CD4-positive, alpha-beta memory T cell (primary cell): ENCODE measurements at regions of chr12 and their contacts with region 1.

Region 1: GRCh38 chr12:46124848-46125619 is 134.7 kb upstream of the SCAF11 start:
- DNase-seq: peak; percentile 60 to 62 (median 62)
- H3K4me3 ChIP-seq: no peak overlapping the region
- H3K4me3 Mint-ChIP-seq: peak overlapping the region; percentile 34 to 76 (median 62)
- H3K27ac ChIP-seq: no peak overlapping the region
- H3K27ac Mint-ChIP-seq: peak overlapping the region in 5 of 7 donors; percentile 85 to 95 (median 89)
- H3K4me1 ChIP-seq: peaks cover 4% of the 10 kb centered on the region
- H3K4me1 Mint-ChIP-seq: peaks cover 3 to 6% (median 4%) of the 10 kb centered on the region in 4 donors
- H3K27me3 ChIP-seq: no peaks in the 10 kb centered on the region
- H3K27me3 Mint-ChIP-seq: peaks cover 8 to 15% of the 10 kb centered on the region in 2 donors

Region 2: GRCh38 chr12:46020768-46021167 is 104.3 kb before region 1 on chr12:
- CTCF ChIA-PET with region 1: no interaction called
- POLR2A ChIA-PET with region 1: no interaction called
- intact Hi-C with region 1: no loop called
- DNase-seq: no peak
- H3K4me3 ChIP-seq: no peak overlapping the region
- H3K4me3 Mint-ChIP-seq: no peak overlapping the region
- H3K27ac ChIP-seq: no peak overlapping the region
- H3K27ac Mint-ChIP-seq: no peak overlapping the region
- H3K4me1 ChIP-seq: no peaks in the 10 kb centered on the region
- H3K4me1 Mint-ChIP-seq: no peaks in the 10 kb centered on the region
- H3K27me3 ChIP-seq: no peaks in the 10 kb centered on the region
- H3K27me3 Mint-ChIP-seq: peaks cover 7 to 10% of the 10 kb centered on the region in 2 donors

Region 3: GRCh38 chr12:46110928-46111699 is 13.9 kb before region 1 on chr12:
- CTCF ChIA-PET with region 1: interaction called, 13 read pairs
- POLR2A ChIA-PET with region 1: no interaction called
- intact Hi-C with region 1: no loop called
- DNase-seq: no peak
- H3K4me3 ChIP-seq: no peak overlapping the region
- H3K4me3 Mint-ChIP-seq: no peak overlapping the region
- H3K27ac ChIP-seq: no peak overlapping the region
- H3K27ac Mint-ChIP-seq: no peak overlapping the region
- H3K4me1 ChIP-seq: no peaks in the 10 kb centered on the region
- H3K4me1 Mint-ChIP-seq: no peaks in the 10 kb centered on the region
- H3K27me3 ChIP-seq: no peaks in the 10 kb centered on the region
- H3K27me3 Mint-ChIP-seq: peaks cover 8 to 13% of the 10 kb centered on the region in 2 donors

Region 4: DNA sequence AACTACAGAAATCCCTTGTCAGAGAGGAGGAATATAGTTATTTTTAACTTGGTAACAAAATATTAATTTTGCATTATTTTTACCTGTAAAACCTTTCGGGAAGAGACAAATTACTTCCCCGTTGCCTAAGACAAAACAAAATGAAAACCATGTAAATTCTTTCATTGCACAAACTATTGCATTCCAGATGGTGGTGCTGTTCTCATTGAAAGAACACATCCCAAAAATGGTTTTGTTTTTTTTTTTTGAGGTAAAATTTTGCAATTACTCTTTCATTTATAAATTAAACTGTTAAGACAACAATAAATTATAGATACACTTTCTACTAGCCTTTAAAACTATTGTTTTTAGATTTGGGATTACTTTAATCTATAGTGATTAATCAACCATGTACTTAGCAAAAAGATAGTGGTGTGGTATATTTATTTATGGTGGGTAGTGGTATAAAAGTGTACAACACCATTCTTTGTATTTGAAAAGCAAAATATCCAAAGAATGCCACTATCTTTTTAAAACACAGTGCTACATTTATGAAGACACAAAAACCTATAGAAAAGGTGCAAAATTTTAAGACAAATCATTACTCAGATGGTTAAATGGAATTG is 28.3 kb after region 1 on chr12:
- CTCF ChIA-PET with region 1: interaction called, 12 read pairs
- POLR2A ChIA-PET with region 1: no interaction called
- intact Hi-C with region 1: loop called (anchors 2 kb)
- DNase-seq: peak in 4 of 5 donors; percentile 38 to 50 (median 45)
- H3K4me3 ChIP-seq: no peak overlapping the region
- H3K4me3 Mint-ChIP-seq: no peak overlapping the region
- H3K27ac ChIP-seq: no peak overlapping the region
- H3K27ac Mint-ChIP-seq: no peak overlapping the region
- H3K4me1 ChIP-seq: peaks cover 11% of the 10 kb centered on the region
- H3K4me1 Mint-ChIP-seq: peaks cover 0 to 11% (median 9%) of the 10 kb centered on the region in 4 donors
- H3K27me3 ChIP-seq: no peaks in the 10 kb centered on the region
- H3K27me3 Mint-ChIP-seq: peaks cover under 1 to 4% of the 10 kb centered on the region in 2 donors

Region 5: DNA sequence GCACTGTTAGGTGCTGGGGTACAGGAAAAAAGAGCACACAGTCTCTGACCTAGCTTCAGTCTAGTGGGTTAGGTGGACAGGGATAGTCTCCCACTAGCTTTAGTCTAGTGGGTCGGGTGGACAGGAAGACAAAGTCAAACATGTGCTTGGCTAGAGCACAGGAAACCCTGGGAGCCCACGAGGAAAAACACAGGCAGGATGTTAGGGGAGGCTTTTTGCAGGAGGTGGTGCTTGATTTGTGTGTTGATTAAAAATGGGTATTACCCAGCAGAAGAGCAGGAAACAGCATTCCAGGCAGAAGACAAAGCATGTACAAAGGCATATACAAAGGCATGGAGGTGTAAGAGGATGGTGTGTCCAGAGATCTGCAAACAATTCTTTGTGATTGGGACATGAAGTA is 224.2 kb after region 1 on chr12:
- CTCF ChIA-PET with region 1: no interaction called
- POLR2A ChIA-PET with region 1: no interaction called
- intact Hi-C with region 1: no loop called
- DNase-seq: no peak
- H3K4me3 ChIP-seq: no peak overlapping the region
- H3K4me3 Mint-ChIP-seq: no peak overlapping the region
- H3K27ac ChIP-seq: no peak overlapping the region
- H3K27ac Mint-ChIP-seq: peak overlapping the region in 1 of 7 donors; percentile 17
- H3K4me1 ChIP-seq: peaks cover 1% of the 10 kb centered on the region
- H3K4me1 Mint-ChIP-seq: peaks cover 8 to 18% (median 11%) of the 10 kb centered on the region in 4 donors
- H3K27me3 ChIP-seq: no peaks in the 10 kb centered on the region
- H3K27me3 Mint-ChIP-seq: peaks cover 0 to 1% of the 10 kb centered on the region in 2 donors

Region 6: GRCh38 chr12:46562625-46563228 is 437.7 kb after region 1 on chr12:
- CTCF ChIA-PET with region 1: no interaction called
- POLR2A ChIA-PET with region 1: no interaction called
- intact Hi-C with region 1: no loop called
- DNase-seq: no peak
- H3K4me3 ChIP-seq: no peak overlapping the region
- H3K4me3 Mint-ChIP-seq: no peak overlapping the region
- H3K27ac ChIP-seq: no peak overlapping the region
- H3K27ac Mint-ChIP-seq: no peak overlapping the region
- H3K4me1 ChIP-seq: no peaks in the 10 kb centered on the region
- H3K4me1 Mint-ChIP-seq: peaks cover 0 to 2% (median under 1%) of the 10 kb centered on the region in 4 donors
- H3K27me3 ChIP-seq: no peaks in the 10 kb centered on the region
- H3K27me3 Mint-ChIP-seq: no peaks in the 10 kb centered on the region

Region 7: DNA sequence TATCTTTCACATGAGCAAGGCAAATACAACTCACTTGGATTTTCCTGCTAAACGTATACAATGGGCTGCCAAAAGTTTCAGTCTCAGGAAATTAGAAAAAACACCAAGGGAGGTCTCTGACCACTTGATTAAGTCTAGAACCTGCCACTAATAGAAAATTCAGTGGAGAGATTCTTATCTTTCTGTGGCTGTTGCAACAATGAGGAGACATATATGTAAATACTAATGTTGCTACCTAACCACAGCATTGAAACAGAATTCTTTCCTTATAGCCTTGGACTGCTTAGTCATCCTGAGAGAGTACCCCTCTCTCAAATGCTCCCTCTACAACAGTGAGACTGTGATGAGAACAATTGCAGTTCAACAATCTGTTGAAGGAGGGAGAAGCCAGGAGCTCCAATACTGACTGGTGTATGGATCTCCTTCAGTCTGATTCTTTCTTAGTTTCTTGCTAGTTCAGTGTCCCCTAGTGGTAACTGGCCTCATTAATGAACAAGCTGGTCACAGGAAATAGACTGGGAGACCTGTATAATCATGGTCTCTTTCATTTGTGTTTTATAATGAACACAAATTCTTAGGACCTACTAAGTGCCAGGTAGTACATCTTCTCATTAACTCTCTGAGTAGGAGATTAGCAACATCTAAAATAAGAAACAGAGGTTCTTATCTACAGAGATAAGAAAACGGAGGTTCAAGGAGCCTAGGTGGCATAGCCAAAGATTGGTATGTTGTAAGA is 536.2 kb after region 1 on chr12:
- CTCF ChIA-PET with region 1: interaction called, 5 read pairs
- POLR2A ChIA-PET with region 1: no interaction called
- intact Hi-C with region 1: loop called (anchors 1 kb)
- DNase-seq: peak in 4 of 5 donors; percentile 48 to 55 (median 52)
- H3K4me3 ChIP-seq: no peak overlapping the region
- H3K4me3 Mint-ChIP-seq: no peak overlapping the region
- H3K27ac ChIP-seq: no peak overlapping the region
- H3K27ac Mint-ChIP-seq: peak overlapping the region in 1 of 7 donors; percentile 43
- H3K4me1 ChIP-seq: peaks cover 14% of the 10 kb centered on the region
- H3K4me1 Mint-ChIP-seq: peaks cover 16 to 27% (median 22%) of the 10 kb centered on the region in 4 donors
- H3K27me3 ChIP-seq: no peaks in the 10 kb centered on the region
- H3K27me3 Mint-ChIP-seq: no peaks in the 10 kb centered on the region

Region 8: DNA sequence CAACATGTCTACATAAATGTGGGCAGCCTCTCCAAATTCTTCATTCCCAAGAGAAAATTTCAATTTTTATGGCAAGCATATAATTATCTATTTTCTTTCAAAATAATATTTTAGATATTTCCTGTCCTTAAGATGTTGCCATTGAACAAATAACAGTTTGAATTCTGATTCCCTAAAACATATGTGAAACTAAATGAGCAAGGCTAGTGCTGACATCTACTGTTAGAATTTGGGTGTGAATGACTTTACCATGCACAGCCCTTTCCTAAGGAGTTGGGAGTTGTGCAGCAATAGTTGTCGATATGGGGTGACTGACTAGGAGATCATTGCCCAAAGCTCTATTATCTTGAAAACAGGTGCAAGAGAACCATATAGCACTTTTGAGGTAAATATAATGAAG is 808.9 kb after region 1 on chr12:
- CTCF ChIA-PET with region 1: interaction called, 12 read pairs
- POLR2A ChIA-PET with region 1: no interaction called
- intact Hi-C with region 1: loop called (anchors 5 kb)
- DNase-seq: peak in 3 of 5 donors; percentile 2 to 7 (median 2)
- H3K4me3 ChIP-seq: no peak overlapping the region
- H3K4me3 Mint-ChIP-seq: no peak overlapping the region
- H3K27ac ChIP-seq: no peak overlapping the region
- H3K27ac Mint-ChIP-seq: no peak overlapping the region
- H3K4me1 ChIP-seq: no peaks in the 10 kb centered on the region
- H3K4me1 Mint-ChIP-seq: no peaks in the 10 kb centered on the region
- H3K27me3 ChIP-seq: peaks cover 3% of the 10 kb centered on the region
- H3K27me3 Mint-ChIP-seq: peaks cover 13 to 32% of the 10 kb centered on the region in 2 donors

Region 9: DNA sequence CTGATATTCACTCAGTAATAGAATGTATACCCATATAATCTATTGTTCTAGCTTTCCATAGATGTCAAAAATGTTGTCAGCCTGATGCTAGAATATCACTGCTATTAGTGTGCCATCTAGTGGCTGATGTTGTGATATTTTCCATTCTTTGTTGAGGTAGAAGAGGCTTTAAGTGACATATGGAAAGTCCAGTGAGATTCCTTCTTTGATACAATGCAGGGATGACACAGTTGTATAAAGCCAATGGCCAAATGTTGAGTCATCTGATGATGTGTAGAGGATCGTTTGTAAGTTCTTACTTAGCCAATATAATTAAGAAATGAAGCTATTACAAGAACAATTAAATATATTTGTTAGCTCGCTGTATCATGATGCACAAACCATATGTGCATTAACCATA is 896.3 kb after region 1 on chr12:
- CTCF ChIA-PET with region 1: interaction called, 35 read pairs
- POLR2A ChIA-PET with region 1: interaction called, 6 read pairs
- intact Hi-C with region 1: loop called (anchors 1 kb)
- DNase-seq: peak in 4 of 5 donors; percentile 39 to 53 (median 50)
- H3K4me3 ChIP-seq: no peak overlapping the region
- H3K4me3 Mint-ChIP-seq: no peak overlapping the region
- H3K27ac ChIP-seq: no peak overlapping the region
- H3K27ac Mint-ChIP-seq: no peak overlapping the region
- H3K4me1 ChIP-seq: no peaks in the 10 kb centered on the region
- H3K4me1 Mint-ChIP-seq: no peaks in the 10 kb centered on the region
- H3K27me3 ChIP-seq: no peaks in the 10 kb centered on the region
- H3K27me3 Mint-ChIP-seq: peaks cover 14 to 20% of the 10 kb centered on the region in 2 donors